ENCODE measurements at regions of chr1 and their contacts with region 1.

Region 1: GRCh38 chr1:40508375-40509341 is at the start of gene EXO5:
- DNase-seq: peak; percentile 59 to 88 (median 67)
- ATAC-seq: peak; percentile 99
- H3K4me3 ChIP-seq: peak within 1 kb of the TSS; percentile 70
- H3K4me3 Mint-ChIP-seq: peak within 1 kb of the TSS; percentile 76 to 93 (median 91)
- H3K27ac ChIP-seq: peak within 1 kb of the TSS; percentile 68
- H3K27ac Mint-ChIP-seq: peak within 1 kb of the TSS; percentile 44 to 91 (median 74)
- H3K4me1 ChIP-seq: no peaks in the 10 kb centered on the region
- H3K4me1 Mint-ChIP-seq: peaks cover 9 to 18% (median 12%) of the 10 kb centered on the region in 7 donors
- H3K27me3 ChIP-seq: no peaks in the 10 kb centered on the region
- H3K27me3 Mint-ChIP-seq: no peaks in the 10 kb centered on the region
- total RNA-seq, gene EXO5: 5.2 to 14.1 (median 8.6) TPM

Region 2: GRCh38 chr1:40462956-40463590 is 45.6 kb before region 1 on chr1:
- CTCF ChIA-PET with region 1: no interaction called
- POLR2A ChIA-PET with region 1: no interaction called
- intact Hi-C with region 1: no loop called
- DNase-seq: peak in 1 of 9 donors; percentile 9
- ATAC-seq: no peak
- H3K4me3 ChIP-seq: no peak overlapping the region
- H3K4me3 Mint-ChIP-seq: no peak overlapping the region
- H3K27ac ChIP-seq: no peak overlapping the region
- H3K27ac Mint-ChIP-seq: peak overlapping the region in 1 of 9 donors; percentile 42
- H3K4me1 ChIP-seq: no peaks in the 10 kb centered on the region
- H3K4me1 Mint-ChIP-seq: no peaks in the 10 kb centered on the region
- H3K27me3 ChIP-seq: no peaks in the 10 kb centered on the region
- H3K27me3 Mint-ChIP-seq: no peaks in the 10 kb centered on the region

Region 3: GRCh38 chr1:40476924-40477677 is 31.6 kb before region 1 on chr1 and contains the start of gene ZFP69:
- CTCF ChIA-PET with region 1: no interaction called
- POLR2A ChIA-PET with region 1: no interaction called
- intact Hi-C with region 1: loop called (anchors 1 kb)
- DNase-seq: peak; percentile 53 to 70 (median 65)
- ATAC-seq: peak; percentile 91
- H3K4me3 ChIP-seq: peak within 1 kb of the TSS; percentile 85
- H3K4me3 Mint-ChIP-seq: peak within 1 kb of the TSS; percentile 83 to 99 (median 92)
- H3K27ac ChIP-seq: peak within 1 kb of the TSS; percentile 64
- H3K27ac Mint-ChIP-seq: peak within 1 kb of the TSS; percentile 70 to 95 (median 82)
- H3K4me1 ChIP-seq: peaks cover 0 to 5% of the 10 kb centered on the region in 2 donors
- H3K4me1 Mint-ChIP-seq: peaks cover 12 to 34% (median 27%) of the 10 kb centered on the region in 7 donors
- H3K27me3 ChIP-seq: no peaks in the 10 kb centered on the region
- H3K27me3 Mint-ChIP-seq: no peaks in the 10 kb centered on the region
- total RNA-seq, gene ZFP69: 2.7 to 4.3 (median 3.4) TPM